ENCODE measurements at regions of chr18 and their contacts with region 1.

Region 1: DNA sequence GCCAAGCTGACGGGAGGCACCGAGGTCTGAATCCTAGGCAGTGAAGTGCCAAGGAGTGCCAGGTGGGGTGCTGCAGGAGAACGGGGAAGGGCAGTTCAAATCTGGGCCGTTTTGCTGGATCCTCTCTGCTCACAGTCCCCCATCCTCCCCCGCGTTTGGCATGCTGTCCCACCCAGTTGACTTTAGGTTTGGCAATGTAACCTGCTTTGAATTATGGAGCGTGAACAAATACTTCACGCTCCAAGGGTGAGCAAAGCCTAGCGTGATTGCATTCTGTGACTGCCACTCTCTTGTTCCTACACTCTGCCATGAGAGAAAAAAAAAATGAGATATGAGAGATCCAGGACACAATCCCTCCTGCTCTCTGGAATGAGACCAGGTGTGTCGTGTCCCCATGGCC is 381.9 kb downstream of the ZNF516 start:
- DNase-seq: no peak
- H3K4me3 ChIP-seq: no peak overlapping the region
- H3K27ac ChIP-seq: no peak overlapping the region
- H3K4me1 ChIP-seq: no peaks in the 10 kb centered on the region
- H3K27me3 ChIP-seq: no peaks in the 10 kb centered on the region
- CTCF ChIP-seq: no peak

Region 2: DNA sequence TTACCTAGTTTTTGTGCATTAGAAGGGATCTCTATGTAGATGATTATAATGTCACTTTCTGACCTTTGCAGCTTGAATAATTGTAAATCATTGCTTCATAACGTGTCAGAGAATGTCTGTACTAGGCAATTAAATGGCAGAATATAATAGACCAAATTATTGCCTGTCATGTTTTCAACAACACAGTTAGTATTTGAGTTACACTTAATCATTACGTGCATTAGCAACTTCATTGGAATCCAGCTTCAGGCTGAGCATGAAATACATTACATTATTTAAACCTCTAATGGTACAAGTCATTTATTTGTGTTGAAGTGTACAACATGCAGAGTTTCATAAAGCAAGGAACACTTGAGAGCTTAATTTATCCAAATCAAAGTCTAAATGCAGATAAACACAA is 1467.4 kb before region 1 on chr18:
- intact Hi-C with region 1: loop called (anchors 5 kb)
- DNase-seq: no peak
- H3K4me3 ChIP-seq: no peak overlapping the region
- H3K27ac ChIP-seq: no peak overlapping the region
- H3K4me1 ChIP-seq: peaks cover 3% of the 10 kb centered on the region
- H3K27me3 ChIP-seq: no peaks in the 10 kb centered on the region
- CTCF ChIP-seq: no peak

Region 3: GRCh38 chr18:76056471-76057110 is 56.5 kb before region 1 on chr18:
- intact Hi-C with region 1: no loop called
- DNase-seq: peak; percentile 45
- H3K4me3 ChIP-seq: no peak overlapping the region
- H3K27ac ChIP-seq: no peak overlapping the region
- H3K4me1 ChIP-seq: no peaks in the 10 kb centered on the region
- H3K27me3 ChIP-seq: no peaks in the 10 kb centered on the region
- CTCF ChIP-seq: no peak

Measured in left ventricle myocardium inferior (tissue), 1 donor.